ENCODE measurements at regions of chr1 and their contacts with region 1.

Region 1: GRCh38 chr1:160085686-160086455 is 4.5 kb downstream of the KCNJ9 start:
- DNase-seq: peak; percentile 93

Region 2: DNA sequence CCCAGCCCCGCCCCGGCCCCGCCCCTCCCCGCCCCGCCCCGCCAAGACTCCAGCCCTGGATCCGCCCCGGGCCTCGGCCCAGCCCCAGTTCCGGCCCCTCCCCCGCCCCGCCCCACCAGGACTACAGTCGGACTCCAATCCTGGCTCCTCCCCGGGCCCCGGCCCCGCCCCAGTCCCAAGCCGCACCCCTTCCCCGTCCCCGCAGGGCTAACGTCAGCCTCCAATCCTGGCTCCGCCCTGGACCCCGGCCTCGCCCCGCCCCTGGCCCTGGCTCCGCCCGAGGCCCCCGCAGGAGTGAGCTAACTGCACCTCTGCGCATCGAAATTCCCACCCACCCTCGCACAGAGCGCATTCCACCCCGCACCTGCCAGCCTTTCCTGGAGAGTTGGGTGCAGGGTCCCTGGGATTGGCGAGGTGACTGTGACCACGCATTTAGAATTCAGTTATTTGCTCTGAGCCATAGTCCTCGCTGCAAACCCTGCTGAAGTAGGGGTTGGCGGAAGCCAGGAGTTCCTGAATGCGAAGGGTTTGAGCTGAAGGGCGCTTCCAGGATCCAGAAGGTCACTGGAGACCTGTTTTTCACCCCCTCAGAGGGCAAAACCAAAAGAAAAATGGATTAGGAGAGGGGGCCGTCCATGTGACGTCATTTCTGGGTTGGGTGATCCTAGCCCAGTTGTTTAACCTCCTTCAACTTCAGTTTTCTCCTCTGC is 13.1 kb after region 1 on chr1:
- CTCF ChIA-PET with region 1: interaction called, 20 read pairs
- POLR2A ChIA-PET with region 1: interaction called, 3 read pairs
- DNase-seq: peak; percentile 100

Region 3: DNA sequence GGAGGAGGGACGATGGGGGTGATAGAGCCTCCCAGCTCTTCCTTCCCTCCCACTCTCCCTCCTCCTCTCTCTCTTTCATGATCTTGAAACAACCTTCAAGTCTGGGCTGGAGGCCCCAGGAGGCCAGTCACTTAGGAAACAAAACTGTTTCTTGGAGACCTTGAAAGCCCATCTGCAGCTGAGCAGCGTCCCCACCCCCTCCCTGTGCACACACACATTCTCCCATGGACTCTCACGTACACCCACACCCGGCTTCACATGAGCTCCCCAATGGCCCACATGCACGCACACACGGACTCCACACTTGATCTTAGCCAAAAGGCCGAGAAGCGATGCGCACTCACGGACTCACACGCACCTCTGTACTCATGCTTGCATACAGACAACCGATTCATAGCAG is 26.5 kb after region 1 on chr1:
- CTCF ChIA-PET with region 1: no interaction called
- POLR2A ChIA-PET with region 1: no interaction called
- DNase-seq: no peak

Region 4: DNA sequence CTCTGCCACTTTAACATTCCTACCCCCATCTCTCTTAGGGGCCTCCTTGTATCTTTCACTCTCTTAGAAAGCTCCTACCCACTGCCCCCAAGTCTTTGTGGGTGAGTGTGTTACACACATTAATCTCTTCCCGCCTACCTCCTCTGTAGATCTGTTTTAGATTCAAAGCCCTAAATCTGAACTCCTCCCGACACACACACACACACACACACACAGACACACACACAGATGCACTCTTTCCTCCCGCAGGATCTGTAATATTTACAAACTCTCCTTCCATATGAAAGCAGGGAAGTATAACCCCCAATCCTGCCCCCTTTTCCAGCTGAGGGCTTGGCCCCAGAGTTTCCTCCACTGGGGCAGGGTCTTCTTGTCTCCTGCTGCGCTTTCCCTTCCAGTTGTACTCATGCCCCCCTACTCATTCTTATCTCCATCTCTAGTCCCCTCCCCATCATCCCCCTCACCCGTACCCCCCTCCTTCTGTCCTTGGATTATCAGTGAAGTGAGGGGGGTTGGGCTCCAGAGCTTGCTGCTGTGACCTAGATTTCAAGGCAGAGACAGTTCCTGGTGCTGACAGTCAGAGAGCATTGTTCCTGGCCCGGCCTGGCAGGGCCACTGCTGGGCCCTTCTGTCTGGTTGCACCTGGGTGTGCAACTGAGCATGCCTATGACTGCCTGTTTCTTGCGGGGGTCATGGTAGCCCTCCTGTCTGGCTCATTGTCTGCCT is 123.6 kb after region 1 on chr1:
- CTCF ChIA-PET with region 1: no interaction called
- POLR2A ChIA-PET with region 1: no interaction called
- DNase-seq: no peak